T-cell (primary cell): ENCODE measurements at regions of chr1 and their contacts with region 1.

Region 1: GRCh38 chr1:156338180-156338973 is at the starts of genes CCT3 and TSACC:
- DNase-seq: peak; percentile 95 to 100 (median 99)
- ATAC-seq: peak; percentile 93 to 98 (median 96)
- H3K4me3 ChIP-seq: peak within 1 kb of the TSS; percentile 90 to 97
- H3K4me3 Mint-ChIP-seq: peak within 1 kb of the TSS; percentile 95 to 97 (median 97)
- H3K27ac ChIP-seq: peak within 1 kb of the TSS; percentile 85
- H3K27ac Mint-ChIP-seq: peak within 1 kb of the TSS; percentile 97 to 100
- H3K4me1 ChIP-seq: peaks cover 14 to 17% of the 10 kb centered on the region in 2 experiments
- H3K4me1 Mint-ChIP-seq: peaks cover 38 to 41% (median 40%) of the 10 kb centered on the region in 3 donors
- H3K27me3 ChIP-seq: no peaks in the 10 kb centered on the region
- H3K27me3 Mint-ChIP-seq: peaks cover 0 to 2% of the 10 kb centered on the region in 2 donors
- total RNA-seq, gene CCT3: 87.2 to 138 (median 124) TPM
- total RNA-seq, gene TSACC: 0.93 TPM in 1 of 5 donors, not detected in the others

Region 2: DNA sequence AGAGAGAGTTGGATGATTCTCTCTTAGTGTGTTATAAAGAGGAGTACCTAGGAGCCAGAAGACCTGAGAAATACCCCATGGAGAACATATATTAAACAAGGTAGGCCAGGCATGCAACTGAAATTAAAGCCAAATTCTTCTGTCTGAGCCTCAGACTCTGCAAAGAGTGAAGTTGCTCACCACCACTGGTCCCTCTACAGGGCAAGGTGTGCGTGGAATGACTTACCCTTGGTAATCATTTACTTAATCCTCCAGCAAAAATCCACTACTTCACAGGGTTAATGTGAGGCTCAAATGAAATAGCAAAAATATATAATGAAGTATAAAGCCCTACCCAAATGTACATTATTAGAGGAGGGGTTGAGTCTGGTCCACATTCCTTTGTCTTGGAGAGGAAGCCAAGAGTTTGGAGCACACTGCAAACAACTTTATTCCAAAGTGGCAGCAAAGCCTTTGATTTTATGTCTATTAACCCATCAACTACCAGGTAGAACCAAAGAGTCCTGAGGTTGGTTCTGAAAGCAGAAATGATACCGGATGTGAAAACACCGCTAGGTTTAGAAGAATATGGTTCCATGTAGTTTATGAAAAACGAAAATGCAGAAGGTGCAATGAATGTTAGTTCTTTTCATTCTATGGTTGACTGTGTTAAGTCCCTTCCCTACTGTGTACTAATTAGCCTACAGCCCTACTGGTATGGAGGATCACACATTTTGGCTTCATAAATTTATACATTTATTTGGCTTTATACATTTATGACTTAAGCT is 326.1 kb before region 1 on chr1:
- CTCF ChIA-PET with region 1: no interaction called
- POLR2A ChIA-PET with region 1: interaction called in 1 of 2 experiments, 10 read pairs
- DNase-seq: no peak
- ATAC-seq: no peak
- H3K4me3 ChIP-seq: no peak overlapping the region
- H3K4me3 Mint-ChIP-seq: no peak overlapping the region
- H3K27ac ChIP-seq: no peak overlapping the region
- H3K27ac Mint-ChIP-seq: no peak overlapping the region
- H3K4me1 ChIP-seq: no peaks in the 10 kb centered on the region
- H3K4me1 Mint-ChIP-seq: peaks cover 8 to 18% (median 14%) of the 10 kb centered on the region in 3 donors
- H3K27me3 ChIP-seq: no peaks in the 10 kb centered on the region
- H3K27me3 Mint-ChIP-seq: no peaks in the 10 kb centered on the region